HepG2 (cell line): ENCODE measurements at regions of chr14 and their contacts with region 1.

Region 1: DNA sequence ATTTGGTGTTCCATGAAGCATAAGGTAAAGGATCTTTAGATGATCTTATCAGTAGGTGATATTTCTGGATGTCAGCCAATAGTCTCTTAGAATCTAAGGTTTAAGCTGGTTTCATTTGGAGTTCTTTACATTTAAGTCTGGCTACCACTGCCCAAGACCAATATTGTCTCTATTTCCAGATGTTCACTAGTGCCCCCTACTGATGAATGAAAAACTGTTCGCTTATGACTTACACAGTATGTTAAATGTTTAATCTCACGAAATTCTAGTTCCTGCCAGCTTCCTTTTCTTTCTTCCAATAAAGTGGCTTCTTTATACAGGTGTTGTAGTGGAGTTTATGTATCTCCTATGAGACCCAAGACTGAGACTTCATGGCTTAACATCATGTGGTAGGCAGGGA is 31.8 kb upstream of the MIS18BP1 start:
- DNase-seq: no peak
- ATAC-seq: no peak
- H3K4me3 ChIP-seq: no peak overlapping the region
- H3K27ac ChIP-seq: no peak overlapping the region
- H3K4me1 ChIP-seq: no peaks in the 10 kb centered on the region
- H3K27me3 ChIP-seq: no peaks in the 10 kb centered on the region
- CTCF ChIP-seq: no peak
- EP300 ChIP-seq: no peak
- POLR2A ChIP-seq: no peak
- RAD21 ChIP-seq: no peak

Region 2: DNA sequence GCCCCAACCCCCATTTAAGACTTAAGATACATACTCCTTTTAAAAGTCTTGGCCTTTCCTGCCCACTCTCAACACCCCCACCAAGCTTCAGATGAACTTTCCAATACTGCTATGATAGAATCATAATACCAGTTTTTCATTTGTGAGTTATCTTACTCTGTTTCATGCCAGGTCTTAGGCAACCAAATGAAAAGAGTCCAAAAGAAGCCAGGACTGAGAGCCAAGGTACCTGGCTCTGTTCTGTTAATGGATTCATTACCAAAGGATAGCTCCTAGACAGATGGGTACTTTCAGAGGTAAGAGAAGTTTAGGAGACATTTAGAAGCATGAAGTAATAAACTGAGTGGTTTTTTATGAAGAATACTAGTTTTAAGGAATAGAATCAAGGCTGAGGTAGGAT is 114.9 kb before region 1 on chr14:
- CTCF ChIA-PET with region 1: no interaction called
- POLR2A ChIA-PET with region 1: no interaction called
- in situ Hi-C with region 1: no loop called
- intact Hi-C with region 1: no loop called
- DNase-seq: no peak
- ATAC-seq: no peak
- H3K4me3 ChIP-seq: no peak overlapping the region
- H3K27ac ChIP-seq: no peak overlapping the region
- H3K4me1 ChIP-seq: no peaks in the 10 kb centered on the region
- H3K27me3 ChIP-seq: no peaks in the 10 kb centered on the region; a peak in 1 of 5 replicates
- CTCF ChIP-seq: no peak
- EP300 ChIP-seq: no peak
- POLR2A ChIP-seq: no peak
- RAD21 ChIP-seq: no peak

Region 3: GRCh38 chr14:45199230-45199629 is 85.6 kb before region 1 on chr14:
- CTCF ChIA-PET with region 1: no interaction called
- POLR2A ChIA-PET with region 1: no interaction called
- in situ Hi-C with region 1: no loop called
- intact Hi-C with region 1: no loop called
- DNase-seq: no peak
- ATAC-seq: no peak
- H3K4me3 ChIP-seq: no peak overlapping the region
- H3K27ac ChIP-seq: no peak overlapping the region
- H3K4me1 ChIP-seq: no peaks in the 10 kb centered on the region
- H3K27me3 ChIP-seq: no peaks in the 10 kb centered on the region
- CTCF ChIP-seq: no peak
- EP300 ChIP-seq: no peak
- POLR2A ChIP-seq: no peak
- RAD21 ChIP-seq: no peak

Region 4: DNA sequence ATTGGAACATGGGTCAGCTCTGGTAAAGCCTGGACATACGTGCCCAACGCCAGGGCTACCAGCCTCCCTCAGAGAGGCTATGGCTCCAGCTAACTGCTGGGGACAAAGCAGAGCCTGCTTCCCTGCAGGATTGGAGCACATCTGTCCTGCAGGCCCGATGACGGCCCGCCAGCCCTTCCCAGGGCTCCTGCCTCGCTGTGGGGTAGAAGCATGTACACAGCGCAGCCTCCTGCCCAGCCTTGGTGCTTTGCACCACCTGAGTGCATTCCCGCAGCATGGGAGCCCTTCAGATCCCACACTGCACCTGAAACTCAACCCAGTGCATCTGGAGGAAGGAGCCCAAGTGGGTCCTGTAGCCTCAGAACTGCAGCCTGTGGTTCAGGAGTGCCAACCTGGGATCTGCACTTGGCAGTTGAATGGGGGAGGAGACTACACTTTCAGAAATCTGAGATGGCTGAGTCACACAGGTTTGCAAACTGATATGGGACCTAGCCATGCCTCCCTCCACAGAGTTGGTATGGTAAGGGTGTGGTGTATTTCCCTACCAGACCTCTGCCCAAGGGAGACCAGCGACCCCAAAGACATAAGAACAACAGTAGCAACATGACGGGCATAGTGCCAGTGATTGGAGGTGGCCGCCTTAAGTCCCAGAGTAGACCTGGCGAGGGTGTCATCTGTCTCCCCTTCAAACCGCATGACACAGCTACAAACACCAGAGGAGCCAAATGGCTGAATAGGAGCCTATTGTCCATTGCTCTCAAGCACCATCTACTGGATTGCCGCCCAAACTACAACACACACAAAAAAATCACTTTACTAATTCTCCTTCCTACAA is 242.1 kb after region 1 on chr14:
- CTCF ChIA-PET with region 1: no interaction called
- POLR2A ChIA-PET with region 1: no interaction called
- in situ Hi-C with region 1: no loop called
- intact Hi-C with region 1: loop called (anchors 10 kb)
- DNase-seq: peak; percentile 63
- ATAC-seq: peak; percentile 99
- H3K4me3 ChIP-seq: no peak overlapping the region
- H3K27ac ChIP-seq: no peak overlapping the region
- H3K4me1 ChIP-seq: no peaks in the 10 kb centered on the region
- H3K27me3 ChIP-seq: no peaks in the 10 kb centered on the region
- CTCF ChIP-seq: peak; percentile 67
- EP300 ChIP-seq: no peak
- POLR2A ChIP-seq: no peak
- RAD21 ChIP-seq: no peak